GM12878 (cell line): ENCODE measurements at regions of chrX and their contacts with region 1.

Region 1: DNA sequence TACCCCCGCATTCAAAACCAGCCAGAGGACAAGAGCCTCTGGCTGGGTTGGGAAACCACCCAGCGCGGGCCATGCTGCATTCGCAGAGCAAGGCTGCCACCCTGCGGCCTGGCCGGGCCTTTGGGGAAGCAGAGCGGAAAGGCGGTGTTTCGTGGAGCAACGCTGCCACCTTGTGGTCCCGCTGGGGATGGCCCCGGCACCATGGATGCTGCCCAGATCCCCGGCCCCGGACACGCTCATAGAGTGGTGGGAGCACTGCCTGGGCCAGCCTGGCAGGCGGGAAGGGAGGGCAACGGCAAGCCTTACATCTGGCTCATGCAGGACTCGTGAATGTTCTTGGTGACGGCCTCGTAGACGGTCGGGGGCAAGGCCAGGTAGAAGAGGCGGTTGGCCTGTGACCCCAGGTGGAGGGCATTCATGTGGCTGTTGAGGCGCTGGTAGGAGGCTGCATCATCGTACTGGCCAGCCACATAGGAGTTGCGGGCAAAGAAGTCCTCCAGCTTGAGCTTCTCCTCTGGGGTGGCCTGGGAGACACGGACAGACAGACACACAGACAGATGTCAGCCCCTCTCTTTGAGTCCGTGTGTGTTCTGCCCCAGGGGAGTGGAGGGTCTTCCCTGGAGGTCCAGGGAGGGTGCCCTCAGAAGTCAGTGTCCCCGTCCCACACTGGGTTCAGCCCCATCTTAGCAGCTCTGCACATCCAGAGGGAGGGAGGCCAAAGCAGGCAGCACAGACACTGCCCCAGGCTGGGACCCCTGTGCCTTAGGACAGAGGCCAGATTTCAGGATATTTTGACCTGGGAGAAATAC is 11.6 kb downstream of the G6PD start:
- DNase-seq: peak; percentile 38
- ATAC-seq: peak; percentile 99
- H3K4me3 ChIP-seq: no peak overlapping the region
- H3K27ac ChIP-seq: peak overlapping the region; percentile 62
- H3K4me1 ChIP-seq: peaks cover 5% of the 10 kb centered on the region
- H3K27me3 ChIP-seq: no peaks in the 10 kb centered on the region
- CTCF ChIP-seq: peak; percentile 98 to 100 (median 100); a peak in 5 of 6 replicates
- EP300 ChIP-seq: no peak
- POLR2A ChIP-seq: no peak
- RAD21 ChIP-seq: peak; percentile 100

Region 2: DNA sequence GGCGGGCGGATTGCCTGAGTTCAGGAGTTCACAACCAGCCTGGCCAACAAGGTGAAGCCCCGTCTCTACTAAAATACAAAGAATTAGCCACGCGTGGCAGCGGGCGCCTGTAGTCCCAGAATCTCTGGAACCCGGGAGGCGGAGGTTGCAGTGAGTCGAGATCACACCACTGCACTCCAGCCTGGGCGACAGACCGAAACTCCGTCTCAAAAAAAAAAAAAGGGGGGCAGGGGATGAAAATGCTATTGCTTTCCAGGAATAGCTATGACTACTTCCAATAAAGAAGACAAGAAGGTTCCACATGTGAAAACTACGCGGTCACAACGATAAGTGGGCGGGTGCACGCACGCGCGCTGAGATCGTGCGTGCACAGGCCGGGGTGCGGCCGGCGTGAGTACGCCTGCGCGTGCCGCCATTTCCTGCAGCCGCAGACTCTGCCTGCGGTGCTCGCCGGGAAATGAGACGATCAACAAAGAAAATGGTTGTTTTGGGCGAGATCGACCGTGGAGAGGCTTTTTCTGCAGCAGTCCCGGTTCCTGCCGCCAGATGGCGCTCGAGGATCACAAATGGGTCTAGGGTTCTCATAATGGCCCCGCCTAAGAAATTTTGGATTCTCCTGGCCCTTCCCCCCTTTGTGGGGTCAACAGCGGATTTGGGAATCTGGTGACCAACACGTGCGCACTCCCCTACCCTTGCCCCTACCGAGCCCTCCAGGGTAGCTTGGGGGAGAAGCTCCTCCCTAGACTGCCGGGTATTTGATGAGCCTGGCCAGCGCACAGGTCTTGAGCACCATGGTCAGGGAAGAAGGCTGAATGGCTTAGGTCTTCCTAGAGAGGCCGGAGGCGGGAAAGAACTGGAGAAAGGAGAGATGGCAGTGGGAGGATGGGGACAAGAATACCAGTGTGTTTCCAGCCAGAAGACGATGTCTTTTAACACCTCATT is 1576.3 kb before region 1 on chrX:
- CTCF ChIA-PET with region 1: no interaction called
- POLR2A ChIA-PET with region 1: no interaction called
- RAD21 ChIA-PET with region 1: no interaction called
- SMC1A ChIA-PET with region 1: no interaction called
- in situ Hi-C with region 1: loop called (anchors 5 kb)
- intact Hi-C with region 1: no loop called
- DNase-seq: peak; percentile 55
- ATAC-seq: peak; percentile 100
- H3K4me3 ChIP-seq: peak overlapping the region; percentile 53; the same call in 1 of the 2 replicates
- H3K27ac ChIP-seq: no peak overlapping the region
- H3K4me1 ChIP-seq: no peaks in the 10 kb centered on the region
- H3K27me3 ChIP-seq: no peaks in the 10 kb centered on the region
- CTCF ChIP-seq: peak; percentile 87 to 97 (median 89)
- EP300 ChIP-seq: no peak
- POLR2A ChIP-seq: 0 out of 2 replicates have a peak, but pooled peaks have one; percentile 38
- RAD21 ChIP-seq: peak; percentile 90

Region 3: GRCh38 chrX:154136627-154137161 is 398.4 kb before region 1 on chrX:
- CTCF ChIA-PET with region 1: interaction called, 3 read pairs
- POLR2A ChIA-PET with region 1: no interaction called
- RAD21 ChIA-PET with region 1: no interaction called
- SMC1A ChIA-PET with region 1: no interaction called
- in situ Hi-C with region 1: loop called (anchors 25 kb)
- intact Hi-C with region 1: no loop called
- DNase-seq: no peak
- ATAC-seq: peak; percentile 85
- H3K4me3 ChIP-seq: no peak overlapping the region
- H3K27ac ChIP-seq: no peak overlapping the region
- H3K4me1 ChIP-seq: no peaks in the 10 kb centered on the region
- H3K27me3 ChIP-seq: no peaks in the 10 kb centered on the region; a peak in 1 of 4 replicates
- CTCF ChIP-seq: peak; percentile 63 to 70 (median 67)
- EP300 ChIP-seq: no peak
- POLR2A ChIP-seq: no peak
- RAD21 ChIP-seq: peak; percentile 53

Region 4: DNA sequence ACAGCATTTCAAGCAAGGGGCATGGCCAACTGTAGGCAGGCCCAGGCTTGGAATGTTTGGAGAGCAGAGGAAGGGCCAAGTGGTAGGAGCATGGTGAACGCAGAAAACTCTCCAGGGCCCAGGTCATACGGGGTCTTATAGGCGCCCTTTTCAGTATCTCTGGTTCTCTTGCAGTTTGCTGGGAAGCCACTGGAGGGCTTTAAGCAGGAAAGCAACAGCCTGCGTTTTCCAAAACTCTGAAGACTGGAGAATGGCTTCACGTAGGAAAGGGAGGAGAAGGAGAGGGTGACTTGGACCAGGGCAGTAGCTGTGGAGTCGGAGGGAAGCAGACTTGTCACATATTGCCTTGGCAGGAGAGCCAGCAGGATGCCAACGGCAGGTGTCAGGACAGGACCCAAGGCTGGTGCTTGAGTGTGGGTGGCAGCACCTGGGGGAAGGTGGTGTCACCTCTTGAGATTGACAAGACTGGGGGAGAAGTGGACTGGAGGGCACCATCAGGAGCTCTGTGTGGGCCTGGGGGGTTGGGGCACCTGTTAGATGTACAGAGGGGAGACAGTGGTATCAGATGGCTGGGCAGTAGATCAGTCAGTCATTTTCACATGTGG is 217.6 kb before region 1 on chrX:
- CTCF ChIA-PET with region 1: no interaction called
- POLR2A ChIA-PET with region 1: no interaction called
- RAD21 ChIA-PET with region 1: no interaction called
- SMC1A ChIA-PET with region 1: no interaction called
- in situ Hi-C with region 1: no loop called
- intact Hi-C with region 1: loop called (anchors 2 kb)
- DNase-seq: no peak
- ATAC-seq: no peak
- H3K4me3 ChIP-seq: no peak overlapping the region
- H3K27ac ChIP-seq: no peak overlapping the region
- H3K4me1 ChIP-seq: peaks cover 16% of the 10 kb centered on the region
- H3K27me3 ChIP-seq: no peaks in the 10 kb centered on the region
- CTCF ChIP-seq: peak; percentile 14 to 44 (median 39); a peak in 2 of 6 replicates
- EP300 ChIP-seq: no peak
- POLR2A ChIP-seq: no peak
- RAD21 ChIP-seq: 0 out of 2 replicates have a peak, but pooled peaks have one; percentile 13

Region 5: DNA sequence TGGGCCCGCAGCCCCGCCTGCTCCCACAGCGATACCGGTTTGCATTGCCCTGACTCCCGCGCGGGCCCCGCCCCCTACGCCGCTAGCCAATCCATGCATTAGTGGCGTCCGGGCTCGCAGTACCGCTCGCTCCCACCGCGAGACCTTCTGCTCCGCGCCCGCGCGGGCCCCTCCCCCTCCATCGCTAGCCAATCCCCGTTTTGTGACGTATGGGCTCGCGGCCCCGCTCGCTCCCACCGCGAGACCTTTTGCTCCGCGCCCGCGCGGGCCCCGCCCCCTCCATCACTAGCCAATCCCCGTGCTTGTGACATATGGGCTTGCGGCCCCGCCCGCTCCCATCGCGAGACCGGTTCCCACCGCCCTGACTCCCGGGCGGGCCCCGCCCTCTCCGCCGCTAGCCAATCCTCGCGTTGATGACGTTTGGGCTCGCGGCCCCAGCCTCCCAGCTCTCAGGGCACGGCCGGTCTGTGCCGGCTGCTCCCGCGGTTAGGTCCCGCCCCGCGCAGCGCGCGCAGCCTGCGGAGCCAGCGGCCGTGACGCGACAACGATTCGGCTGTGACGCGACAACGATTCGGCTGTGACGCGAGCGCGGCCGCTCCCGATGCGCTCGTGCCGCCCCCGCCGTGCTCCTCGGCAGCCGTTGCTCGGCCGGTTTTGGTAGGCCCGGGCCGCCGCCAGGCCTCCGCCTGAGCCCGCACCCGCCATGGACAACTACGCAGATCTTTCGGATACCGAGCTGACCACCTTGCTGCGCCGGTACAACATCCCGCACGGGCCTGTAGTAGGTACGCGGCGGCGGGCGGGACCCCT is 156.1 kb before region 1 on chrX and contains the start of gene EMD:
- CTCF ChIA-PET with region 1: interaction called, 18 read pairs
- POLR2A ChIA-PET with region 1: no interaction called
- RAD21 ChIA-PET with region 1: interaction called, 11 read pairs
- SMC1A ChIA-PET with region 1: interaction called, 4 read pairs
- in situ Hi-C with region 1: loop called (anchors 5 kb)
- intact Hi-C with region 1: no loop called
- DNase-seq: peak; percentile 87
- ATAC-seq: peak; percentile 89
- H3K4me3 ChIP-seq: peak within 1 kb of the TSS; percentile 88
- H3K27ac ChIP-seq: peak within 1 kb of the TSS; percentile 93
- H3K4me1 ChIP-seq: peaks cover 2% of the 10 kb centered on the region
- H3K27me3 ChIP-seq: no peaks in the 10 kb centered on the region
- CTCF ChIP-seq: no peak
- EP300 ChIP-seq: no peak
- POLR2A ChIP-seq: peak; percentile 82
- RAD21 ChIP-seq: no peak
- polyA plus RNA-seq, gene EMD: 0.76 to 1.9 TPM